Posterior vena cava (tissue), 2 donors: ENCODE measurements at regions of chr2 and their contacts with region 1.

Region 1: GRCh38 chr2:210195101-210195852 is 24.1 kb upstream of the KANSL1L start:
- DNase-seq: no peak

Region 2: GRCh38 chr2:208426412-208427045 is 1768.7 kb before region 1 on chr2:
- intact Hi-C with region 1: no loop called
- DNase-seq: no peak

Region 3: DNA sequence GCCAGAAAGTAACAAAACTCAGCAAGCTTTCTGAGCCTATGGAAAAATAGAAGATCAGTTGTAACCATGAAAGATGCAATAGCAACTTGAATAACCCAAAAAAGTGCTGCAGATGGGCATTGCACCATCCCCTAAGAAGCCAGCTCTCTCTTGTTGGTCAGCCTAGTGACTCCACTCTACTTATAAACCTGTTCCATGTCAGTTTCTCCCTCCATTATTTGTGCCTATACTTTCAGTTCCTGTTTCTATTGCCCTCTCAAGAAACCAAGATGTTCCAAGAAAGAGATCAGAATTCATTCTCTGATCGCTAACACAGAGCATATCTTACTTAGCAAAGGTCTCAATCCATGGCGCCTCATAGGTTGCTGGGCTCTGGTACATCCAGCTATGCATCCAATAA is 941.7 kb before region 1 on chr2:
- intact Hi-C with region 1: loop called in 1 of 2 experiments (anchors 5 kb)
- DNase-seq: no peak

Region 4: DNA sequence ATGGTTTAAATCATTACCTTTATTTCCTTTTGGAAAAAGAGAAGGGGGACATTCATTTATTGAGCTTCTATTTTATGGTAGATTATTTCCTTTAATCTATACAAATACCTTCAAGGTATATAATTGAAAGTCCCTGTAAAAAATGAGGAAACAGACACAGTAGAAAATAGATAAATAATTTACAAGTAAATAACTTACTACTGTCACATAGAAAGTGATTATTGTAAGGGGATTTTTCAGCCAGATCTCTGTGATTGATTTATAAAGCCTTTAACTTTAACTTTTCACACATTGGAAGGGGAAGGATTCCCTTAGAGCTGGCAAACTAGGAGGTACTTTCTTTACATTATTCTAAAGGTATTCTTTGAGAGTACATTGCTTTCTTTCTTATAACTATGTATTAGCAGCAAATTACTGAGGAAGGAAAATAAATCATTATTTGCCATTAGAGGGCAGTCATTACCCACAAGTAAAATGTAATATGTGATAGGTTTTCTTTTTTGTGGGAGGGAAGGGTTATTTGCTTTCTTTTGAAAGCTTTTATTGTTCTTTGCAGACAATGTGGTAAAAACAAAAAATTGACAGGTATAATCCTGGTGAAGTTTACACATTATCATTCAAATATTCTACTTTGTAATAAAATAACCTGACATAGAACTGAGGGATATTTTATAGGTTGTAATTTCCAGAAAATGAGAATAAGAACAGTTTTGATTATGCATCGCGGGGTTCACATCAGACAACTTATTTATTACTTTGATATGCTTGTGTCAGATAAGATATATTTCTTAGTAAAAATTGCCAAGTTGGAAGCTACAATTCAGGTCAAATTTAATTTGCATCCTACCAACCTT is 217.7 kb before region 1 on chr2:
- intact Hi-C with region 1: loop called (anchors 5 kb)
- DNase-seq: no peak

Region 5: DNA sequence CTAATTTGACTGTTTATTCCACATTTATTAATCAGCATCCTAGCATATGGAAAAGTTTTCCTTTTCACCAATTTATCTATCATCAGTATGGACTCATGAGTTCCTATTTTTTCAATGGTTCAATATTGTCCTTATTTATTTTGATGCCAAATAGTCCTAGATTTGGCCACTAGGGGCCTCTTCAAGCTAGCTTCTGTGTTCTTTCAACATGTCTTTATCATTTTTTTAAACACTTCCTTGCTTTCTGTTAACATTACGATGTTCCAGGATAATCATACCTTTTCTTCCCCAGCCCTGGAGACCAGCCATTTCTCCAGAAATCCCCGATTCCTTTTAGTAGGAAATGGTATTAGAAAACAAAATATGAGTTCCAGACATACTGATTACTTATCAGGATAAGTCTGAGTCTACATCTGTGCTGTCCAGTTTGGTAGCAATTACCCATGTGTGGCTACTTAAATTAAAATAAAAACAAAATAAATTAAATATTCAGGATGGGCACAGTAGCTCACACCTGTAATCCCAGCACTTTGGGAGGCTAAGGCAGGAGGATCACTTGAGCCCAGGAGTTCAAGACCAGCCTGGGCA is 122.3 kb before region 1 on chr2:
- intact Hi-C with region 1: loop called in 1 of 2 experiments (anchors 10 kb)
- DNase-seq: no peak